ENCODE measurements at regions of chr18 and their contacts with region 1.

Region 1: GRCh38 chr18:10560450-10561045 is 34.7 kb downstream of the NAPG start:
- DNase-seq: peak in 4 of 5 donors; percentile 34 to 54 (median 44)
- H3K4me3 ChIP-seq: no peak overlapping the region
- H3K4me3 Mint-ChIP-seq: peak overlapping the region in 3 of 8 donors; percentile 6 to 61 (median 46)
- H3K27ac ChIP-seq: no peak overlapping the region
- H3K27ac Mint-ChIP-seq: no peak overlapping the region
- H3K4me1 ChIP-seq: peaks cover 5% of the 10 kb centered on the region
- H3K4me1 Mint-ChIP-seq: peaks cover 5 to 16% (median 12%) of the 10 kb centered on the region in 4 donors
- H3K27me3 ChIP-seq: no peaks in the 10 kb centered on the region
- H3K27me3 Mint-ChIP-seq: no peaks in the 10 kb centered on the region

Region 2: GRCh38 chr18:10546557-10547300 is 13.8 kb before region 1 on chr18:
- CTCF ChIA-PET with region 1: interaction called, 25 read pairs
- POLR2A ChIA-PET with region 1: no interaction called
- intact Hi-C with region 1: no loop called
- DNase-seq: no peak
- H3K4me3 ChIP-seq: no peak overlapping the region
- H3K4me3 Mint-ChIP-seq: no peak overlapping the region
- H3K27ac ChIP-seq: no peak overlapping the region
- H3K27ac Mint-ChIP-seq: peak overlapping the region in 1 of 7 donors; percentile 52
- H3K4me1 ChIP-seq: no peaks in the 10 kb centered on the region
- H3K4me1 Mint-ChIP-seq: no peaks in the 10 kb centered on the region
- H3K27me3 ChIP-seq: no peaks in the 10 kb centered on the region
- H3K27me3 Mint-ChIP-seq: no peaks in the 10 kb centered on the region

Region 3: DNA sequence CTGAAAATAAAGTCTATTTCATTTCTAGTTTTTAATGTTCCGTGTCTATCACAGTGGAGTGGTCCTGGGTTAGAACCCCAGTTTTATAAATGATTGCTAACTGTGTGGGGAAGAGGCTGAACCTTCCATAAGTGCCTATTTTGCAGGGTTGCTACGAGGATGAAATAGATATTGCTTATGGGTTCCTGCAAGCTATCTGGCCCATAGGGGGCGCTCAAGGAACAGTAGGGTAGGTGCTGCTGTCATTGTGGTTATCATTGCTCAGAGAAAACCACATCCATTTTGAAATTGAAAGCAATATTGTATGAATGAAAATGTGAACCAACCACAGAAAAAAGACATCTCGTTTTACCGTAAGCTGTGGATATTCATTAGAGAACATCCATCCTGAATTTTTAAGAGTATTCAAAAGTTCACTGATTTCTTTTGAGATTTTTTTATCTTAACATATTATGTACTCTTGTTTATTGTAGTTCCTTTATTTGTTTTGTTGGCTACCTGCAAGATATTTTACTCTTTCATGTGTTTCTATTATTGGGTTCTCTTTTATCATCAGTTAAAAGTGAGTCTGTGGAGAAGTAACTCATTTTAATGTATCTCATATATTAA is 226.8 kb after region 1 on chr18:
- CTCF ChIA-PET with region 1: interaction called, 4 read pairs
- POLR2A ChIA-PET with region 1: no interaction called
- intact Hi-C with region 1: loop called (anchors 2 kb)
- DNase-seq: peak; percentile 73 to 81 (median 75)
- H3K4me3 ChIP-seq: no peak overlapping the region
- H3K4me3 Mint-ChIP-seq: peak overlapping the region in 2 of 8 donors; percentile 28 to 35
- H3K27ac ChIP-seq: no peak overlapping the region
- H3K27ac Mint-ChIP-seq: peak overlapping the region in 4 of 7 donors; percentile 42 to 60 (median 47)
- H3K4me1 ChIP-seq: no peaks in the 10 kb centered on the region
- H3K4me1 Mint-ChIP-seq: peaks cover 2 to 5% (median 5%) of the 10 kb centered on the region in 4 donors
- H3K27me3 ChIP-seq: no peaks in the 10 kb centered on the region
- H3K27me3 Mint-ChIP-seq: peaks cover 2 to 3% of the 10 kb centered on the region in 2 donors

Region 4: GRCh38 chr18:11676867-11677266 is 1116.3 kb after region 1 on chr18:
- CTCF ChIA-PET with region 1: no interaction called
- POLR2A ChIA-PET with region 1: no interaction called
- intact Hi-C with region 1: no loop called
- DNase-seq: no peak
- H3K4me3 ChIP-seq: no peak overlapping the region
- H3K4me3 Mint-ChIP-seq: no peak overlapping the region
- H3K27ac ChIP-seq: no peak overlapping the region
- H3K27ac Mint-ChIP-seq: no peak overlapping the region
- H3K4me1 ChIP-seq: no peaks in the 10 kb centered on the region
- H3K4me1 Mint-ChIP-seq: no peaks in the 10 kb centered on the region
- H3K27me3 ChIP-seq: no peaks in the 10 kb centered on the region
- H3K27me3 Mint-ChIP-seq: peaks cover 14 to 33% of the 10 kb centered on the region in 2 donors

Region 5: DNA sequence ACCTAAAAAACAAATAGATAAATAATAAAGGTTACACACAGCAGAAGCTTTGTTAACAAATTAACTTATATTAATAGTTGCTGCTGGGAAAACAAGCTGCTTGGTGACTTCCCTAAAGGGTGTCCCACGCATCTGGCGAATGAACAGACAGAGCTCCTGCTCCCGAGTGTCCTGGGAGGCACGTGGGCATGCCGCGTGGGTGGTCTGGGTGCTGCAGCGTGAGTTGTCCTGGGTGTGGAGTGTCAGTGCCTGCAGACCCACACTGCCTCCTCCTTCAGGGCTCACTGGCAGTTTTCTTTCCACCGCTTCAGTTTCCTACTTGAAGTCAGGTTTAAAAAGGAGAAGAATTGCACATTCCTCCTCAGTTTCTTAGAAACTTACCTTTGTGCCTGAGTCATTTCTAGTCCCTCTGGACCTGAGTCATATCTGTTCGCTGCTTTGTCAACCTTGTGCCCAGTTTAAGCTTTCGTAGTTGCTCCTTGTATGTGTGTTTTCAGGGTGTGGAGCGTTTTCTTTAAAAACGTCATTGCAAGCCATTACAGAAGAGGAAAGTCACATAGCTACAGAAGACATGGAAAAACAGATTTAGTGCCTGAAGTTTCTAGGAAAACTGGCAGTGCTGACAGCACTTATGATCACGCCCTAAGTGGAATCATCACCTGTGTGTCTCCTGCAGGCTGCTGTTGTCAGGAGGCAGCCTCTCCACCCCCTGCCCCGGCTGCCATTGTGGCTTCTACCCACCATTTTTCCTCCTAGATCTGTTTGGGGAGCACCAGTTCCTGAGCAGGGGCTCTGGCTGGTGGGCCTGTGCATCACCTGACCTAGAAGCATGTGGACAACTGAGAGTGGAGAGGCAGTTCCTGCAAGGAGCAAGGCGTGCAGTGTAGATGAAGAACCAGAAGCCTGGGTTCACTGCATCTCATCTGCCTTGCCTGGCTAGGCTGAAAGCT is 1445.3 kb after region 1 on chr18:
- CTCF ChIA-PET with region 1: no interaction called
- POLR2A ChIA-PET with region 1: no interaction called
- intact Hi-C with region 1: no loop called
- DNase-seq: no peak
- H3K4me3 ChIP-seq: no peak overlapping the region
- H3K4me3 Mint-ChIP-seq: no peak overlapping the region
- H3K27ac ChIP-seq: no peak overlapping the region
- H3K27ac Mint-ChIP-seq: no peak overlapping the region
- H3K4me1 ChIP-seq: no peaks in the 10 kb centered on the region
- H3K4me1 Mint-ChIP-seq: no peaks in the 10 kb centered on the region
- H3K27me3 ChIP-seq: no peaks in the 10 kb centered on the region
- H3K27me3 Mint-ChIP-seq: no peaks in the 10 kb centered on the region

Measured in CD4-positive, alpha-beta memory T cell (primary cell).